Activated B cell treated with CpG ODN at 0.5 μM for 24 hours (primary cell): ENCODE measurements at regions of chrX and their contacts with region 1.

Region 1: GRCh38 chrX:15686818-15687685 is 22.4 kb upstream of the CLTRN start:
- DNase-seq: no peak
- ATAC-seq: peak; percentile 89
- H3K4me3 Mint-ChIP-seq: no peak overlapping the region
- H3K27ac Mint-ChIP-seq: no peak overlapping the region
- H3K4me1 Mint-ChIP-seq: peaks cover 3% of the 10 kb centered on the region
- H3K27me3 Mint-ChIP-seq: no peaks in the 10 kb centered on the region
- CTCF ChIP-seq: no peak

Region 2: DNA sequence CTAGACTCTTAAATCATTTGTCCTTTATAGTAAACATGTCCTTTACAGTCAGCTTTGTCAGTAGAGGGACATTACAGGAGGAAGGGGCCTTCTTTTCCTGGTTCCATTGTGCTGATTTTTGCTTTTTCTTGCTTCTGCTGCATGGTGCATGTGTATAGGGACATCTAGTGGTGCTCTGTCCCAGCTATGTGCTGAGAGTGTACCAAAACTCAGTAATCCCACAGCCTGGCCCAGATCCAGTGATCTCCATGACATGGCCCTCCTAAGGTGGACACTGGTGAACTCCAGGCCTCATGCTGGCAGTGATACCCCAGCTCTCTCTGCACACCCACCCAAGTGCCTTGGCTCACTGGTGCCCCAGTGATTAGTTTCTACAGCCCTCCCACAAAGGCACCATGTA is 525.4 kb after region 1 on chrX:
- CTCF ChIA-PET with region 1: no interaction called
- POLR2A ChIA-PET with region 1: no interaction called
- intact Hi-C with region 1: loop called (anchors 1 kb)
- DNase-seq: no peak
- ATAC-seq: no peak
- H3K4me3 Mint-ChIP-seq: no peak overlapping the region
- H3K27ac Mint-ChIP-seq: no peak overlapping the region
- H3K4me1 Mint-ChIP-seq: no peaks in the 10 kb centered on the region
- H3K27me3 Mint-ChIP-seq: no peaks in the 10 kb centered on the region
- CTCF ChIP-seq: no peak